Activated CD4-positive, alpha-beta T cell treated with anti-CD3 and anti-CD28 coated beads, Interleukin-2, amount 10 ng/mL, durations not matched to agents 24 days and 14 days (primary cell): ENCODE measurements at regions of chr1 and their contacts with region 1.

Region 1: DNA sequence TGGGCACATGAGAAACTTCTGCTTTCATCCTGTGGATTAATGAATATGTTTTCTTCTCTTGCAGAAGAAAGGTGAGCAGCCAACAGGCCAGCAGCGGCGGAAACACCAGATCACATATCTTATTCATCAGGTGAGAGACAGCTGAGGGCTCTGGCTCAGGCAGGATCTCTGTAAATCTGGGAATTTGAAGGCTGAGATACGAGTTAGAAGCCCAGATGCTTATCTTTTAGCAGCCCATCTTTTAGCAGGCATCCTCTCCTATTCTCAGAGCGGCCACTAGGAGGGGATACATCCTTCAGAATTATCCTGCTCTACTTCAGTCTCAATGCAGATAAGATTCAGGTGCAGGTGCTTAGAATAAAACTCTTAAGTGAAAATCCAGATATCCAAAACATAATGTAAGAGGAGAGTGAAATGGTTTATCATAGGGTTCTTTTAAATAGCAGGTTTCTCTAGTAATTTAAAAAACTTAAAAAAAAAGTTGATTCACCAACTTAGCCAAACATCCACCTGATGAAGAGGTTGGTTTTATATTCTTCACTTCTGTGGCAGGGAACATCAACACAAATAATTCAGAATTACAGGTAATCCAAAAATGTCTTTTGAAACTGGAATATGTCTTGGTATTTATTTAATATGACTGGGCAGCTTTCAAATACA is 19.3 kb downstream of the SH2D2A start:
- DNase-seq: peak; percentile 90
- H3K4me3 Mint-ChIP-seq: no peak overlapping the region
- H3K27ac Mint-ChIP-seq: no peak overlapping the region
- H3K4me1 Mint-ChIP-seq: peaks cover 17% of the 10 kb centered on the region
- H3K27me3 Mint-ChIP-seq: no peaks in the 10 kb centered on the region

Region 2: GRCh38 chr1:156838981-156839410 is 41.7 kb after region 1 on chr1:
- intact Hi-C with region 1: loop called (anchors 5 kb)
- DNase-seq: peak; percentile 87
- H3K4me3 Mint-ChIP-seq: peak overlapping the region; percentile 58
- H3K27ac Mint-ChIP-seq: peak overlapping the region; percentile 46
- H3K4me1 Mint-ChIP-seq: peaks cover 51% of the 10 kb centered on the region
- H3K27me3 Mint-ChIP-seq: peaks cover 19% of the 10 kb centered on the region

Region 3: DNA sequence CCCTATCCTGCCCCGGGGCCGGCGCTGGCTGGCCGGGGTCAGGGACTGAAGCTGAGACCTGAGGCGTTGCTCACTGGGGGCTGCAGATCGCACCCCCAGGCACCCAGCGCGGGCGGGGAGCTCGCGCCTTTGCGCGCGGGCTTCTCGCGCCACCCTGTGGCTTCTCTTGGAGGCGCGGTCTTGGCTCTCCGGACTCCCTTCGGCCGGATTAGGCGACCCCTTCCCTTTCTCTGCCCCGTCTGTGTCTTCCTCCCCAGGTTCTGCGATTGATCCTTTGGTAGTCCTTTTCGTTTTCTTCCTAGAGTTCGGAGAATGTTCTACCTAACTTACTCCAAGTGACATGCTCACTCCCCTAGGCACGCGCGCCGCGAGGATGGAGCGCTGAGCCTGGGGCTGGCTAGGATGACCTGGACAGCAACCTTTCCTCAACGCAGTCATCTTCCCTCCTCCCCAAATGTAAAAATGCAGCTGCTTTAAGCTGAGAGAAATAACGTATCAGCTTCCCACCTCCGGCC is 62.8 kb after region 1 on chr1:
- intact Hi-C with region 1: loop called (anchors 1 kb)
- DNase-seq: peak; percentile 91
- H3K4me3 Mint-ChIP-seq: peak overlapping the region; percentile 80
- H3K27ac Mint-ChIP-seq: peak overlapping the region; percentile 18
- H3K4me1 Mint-ChIP-seq: peaks cover 51% of the 10 kb centered on the region
- H3K27me3 Mint-ChIP-seq: peaks cover 25% of the 10 kb centered on the region

Region 4: DNA sequence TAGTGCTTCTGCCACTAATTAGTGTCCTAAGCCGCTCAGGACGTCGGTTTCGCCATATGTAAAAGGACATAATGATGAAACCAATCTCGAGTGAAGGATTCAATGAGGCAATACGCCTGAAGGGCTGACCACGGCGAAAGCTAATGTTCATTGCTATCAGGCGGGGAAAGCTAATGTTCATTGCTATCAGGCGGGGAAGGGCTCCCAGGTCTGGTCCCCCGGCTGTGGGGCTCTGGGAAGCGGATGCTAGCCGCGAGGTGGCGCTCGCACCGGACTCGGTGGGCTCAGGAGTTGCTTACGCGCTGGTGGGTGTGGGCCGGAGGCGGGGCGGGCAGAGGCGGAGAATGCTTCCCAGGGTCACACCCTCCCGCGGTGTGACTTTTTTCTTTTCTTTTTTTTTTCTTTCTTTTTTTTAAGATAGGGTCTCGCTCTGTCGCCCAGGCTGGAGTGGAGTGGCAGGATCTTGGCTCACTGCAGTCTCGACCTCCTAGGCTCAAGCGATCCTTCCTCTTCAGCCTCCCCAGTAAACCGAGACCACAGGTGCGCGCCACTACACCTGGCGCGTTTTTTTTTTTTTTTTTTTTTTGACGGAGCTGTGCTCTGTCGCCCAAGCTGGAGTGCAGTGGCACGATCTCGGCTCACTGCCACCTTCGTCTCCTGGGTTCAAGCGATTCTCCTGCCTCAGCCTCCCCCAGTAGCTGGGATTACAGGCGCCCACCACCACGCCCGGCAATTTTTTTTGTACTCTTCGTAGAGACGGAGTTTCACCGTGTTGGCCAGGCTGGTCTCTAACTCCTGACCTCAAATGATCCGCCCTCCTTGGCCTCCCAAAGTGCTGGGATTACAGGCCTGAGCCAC is 95.1 kb after region 1 on chr1:
- intact Hi-C with region 1: loop called (anchors 1 kb)
- DNase-seq: peak; percentile 96
- H3K4me3 Mint-ChIP-seq: peak overlapping the region; percentile 66
- H3K27ac Mint-ChIP-seq: no peak overlapping the region
- H3K4me1 Mint-ChIP-seq: peaks cover 13% of the 10 kb centered on the region
- H3K27me3 Mint-ChIP-seq: peaks cover 36% of the 10 kb centered on the region

Region 5: GRCh38 chr1:156920233-156921052 is 123.1 kb after region 1 on chr1 and contains the start of gene LRRC71:
- intact Hi-C with region 1: loop called (anchors 5 kb)
- DNase-seq: peak; percentile 94
- H3K4me3 Mint-ChIP-seq: peak within 1 kb of the TSS; percentile 45
- H3K27ac Mint-ChIP-seq: no peak within 1 kb of the TSS
- H3K4me1 Mint-ChIP-seq: peaks cover 5% of the 10 kb centered on the region
- H3K27me3 Mint-ChIP-seq: peaks cover 73% of the 10 kb centered on the region
- total RNA-seq, gene LRRC71: not detected in 2 replicates